SK-N-SH (cell line): ENCODE measurements at regions of chr3 and their contacts with region 1.

Region 1: DNA sequence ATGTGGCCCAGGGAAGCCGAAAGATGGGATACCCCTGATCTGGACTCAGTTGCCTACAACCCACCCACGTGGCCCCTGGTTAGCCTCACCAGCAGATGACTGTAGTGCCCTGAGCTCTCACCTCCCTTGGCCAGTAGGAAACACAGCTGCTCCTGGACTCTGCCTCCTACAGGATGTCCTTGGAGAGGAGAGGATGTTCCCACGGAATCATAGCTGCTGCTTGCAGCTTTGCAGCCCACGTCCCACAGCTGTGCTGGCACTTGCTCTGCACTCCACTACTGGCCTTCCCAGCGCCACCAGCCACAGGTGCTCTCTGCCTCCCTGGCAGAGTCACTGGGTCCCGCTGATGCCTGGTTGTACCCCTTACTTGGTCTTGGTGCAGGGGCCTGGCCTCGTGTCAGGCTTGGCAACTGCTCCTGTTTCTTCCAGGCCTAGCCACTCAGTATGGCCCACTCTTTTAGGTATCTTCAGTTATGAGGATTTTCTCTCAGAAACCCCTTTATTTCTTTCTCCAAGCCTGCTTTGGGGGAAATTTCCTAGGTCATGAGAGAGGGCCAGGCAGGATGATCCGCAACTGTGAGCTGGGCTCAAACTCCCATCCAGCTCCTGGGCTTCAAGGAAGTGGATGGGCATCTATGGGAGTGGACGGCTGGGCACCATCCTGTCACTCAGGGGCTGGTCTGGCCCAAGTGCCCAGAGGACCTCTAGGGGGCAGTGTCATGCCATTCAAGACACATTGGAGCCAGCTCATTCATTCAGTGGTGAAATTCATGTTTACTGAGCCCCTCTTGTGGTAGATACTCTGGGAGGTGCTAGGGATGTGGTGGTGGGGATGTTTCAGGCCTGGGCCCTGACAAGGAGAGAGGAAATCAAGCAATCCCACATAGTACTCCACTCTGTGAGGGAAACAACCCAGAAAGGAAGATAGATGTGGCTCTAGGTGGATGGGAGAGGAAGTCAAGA is 16.2 kb upstream of the VILL start:
- DNase-seq: peak; percentile 78
- H3K4me3 ChIP-seq: no peak overlapping the region; a peak in 1 of 4 replicates
- H3K27ac ChIP-seq: no peak overlapping the region
- H3K4me1 ChIP-seq: no peaks in the 10 kb centered on the region; a peak in 1 of 4 replicates
- H3K27me3 ChIP-seq: no peaks in the 10 kb centered on the region
- CTCF ChIP-seq: peak; percentile 83
- EP300 ChIP-seq: no peak
- RAD21 ChIP-seq: peak; percentile 70

Region 2: GRCh38 chr3:37945807-37946530 is 28.4 kb before region 1 on chr3:
- CTCF ChIA-PET with region 1: interaction called, 14 read pairs
- POLR2A ChIA-PET with region 1: no interaction called
- DNase-seq: peak; percentile 89
- H3K4me3 ChIP-seq: no peak overlapping the region; a peak in 1 of 4 replicates
- H3K27ac ChIP-seq: peak overlapping the region; percentile 83 to 98
- H3K4me1 ChIP-seq: peaks cover 25 to 38% of the 10 kb centered on the region in 2 experiments
- H3K27me3 ChIP-seq: no peaks in the 10 kb centered on the region
- CTCF ChIP-seq: no peak
- EP300 ChIP-seq: peak; percentile 54 to 96; a peak in 3 of 4 replicates
- RAD21 ChIP-seq: peak; percentile 40

Region 3: DNA sequence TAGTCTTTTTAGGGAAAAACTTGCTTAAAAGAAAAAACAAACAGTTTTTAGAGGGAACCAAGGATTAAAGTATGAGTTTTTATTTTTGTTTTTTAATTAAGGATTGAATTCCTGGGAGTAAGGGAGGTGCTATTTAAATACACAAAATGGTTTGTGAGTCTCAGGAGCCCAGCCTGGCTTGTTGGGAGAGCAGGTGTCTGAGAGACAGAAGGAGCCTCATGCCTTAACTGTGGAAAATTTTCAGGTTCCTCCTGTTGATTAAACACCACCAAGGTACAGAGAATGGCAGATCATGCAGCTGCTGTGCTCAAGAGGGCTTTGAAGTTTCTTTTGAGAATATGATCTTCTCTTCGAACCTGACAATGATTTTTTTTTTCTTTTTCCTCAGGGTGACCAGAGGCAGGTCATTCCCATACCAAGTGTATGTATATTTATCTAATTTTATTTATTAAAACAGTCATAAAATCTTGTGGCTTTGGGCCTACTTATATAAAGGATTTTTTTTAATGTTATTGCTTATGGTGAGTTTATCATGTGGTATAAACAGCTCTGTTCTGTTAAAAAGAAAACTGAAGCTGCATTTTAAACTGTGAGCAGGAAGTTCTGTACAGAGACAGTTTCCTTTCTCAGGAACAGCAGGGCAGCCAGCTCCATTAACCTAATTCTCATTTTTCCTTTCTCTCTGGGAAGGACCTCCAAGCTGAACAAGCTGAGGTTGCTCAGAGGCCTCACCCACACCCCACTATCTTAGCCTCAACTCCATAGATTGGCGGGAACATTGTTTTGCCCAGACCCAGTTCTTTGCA is 17.5 kb before region 1 on chr3:
- CTCF ChIA-PET with region 1: interaction called, 24 read pairs
- POLR2A ChIA-PET with region 1: no interaction called
- DNase-seq: no peak
- H3K4me3 ChIP-seq: no peak overlapping the region
- H3K27ac ChIP-seq: no peak overlapping the region
- H3K4me1 ChIP-seq: peaks cover 6 to 9% of the 10 kb centered on the region in 2 experiments; a peak in 3 of 4 replicates
- H3K27me3 ChIP-seq: no peaks in the 10 kb centered on the region
- CTCF ChIP-seq: no peak
- EP300 ChIP-seq: no peak
- RAD21 ChIP-seq: no peak

Region 4: GRCh38 chr3:37986479-37987314 is 12.3 kb after region 1 on chr3:
- CTCF ChIA-PET with region 1: interaction called, 33 read pairs
- POLR2A ChIA-PET with region 1: no interaction called
- DNase-seq: no peak
- H3K4me3 ChIP-seq: no peak overlapping the region
- H3K27ac ChIP-seq: no peak overlapping the region
- H3K4me1 ChIP-seq: no peaks in the 10 kb centered on the region; a peak in 1 of 4 replicates
- H3K27me3 ChIP-seq: no peaks in the 10 kb centered on the region
- CTCF ChIP-seq: no peak
- EP300 ChIP-seq: no peak
- RAD21 ChIP-seq: no peak

Region 5: DNA sequence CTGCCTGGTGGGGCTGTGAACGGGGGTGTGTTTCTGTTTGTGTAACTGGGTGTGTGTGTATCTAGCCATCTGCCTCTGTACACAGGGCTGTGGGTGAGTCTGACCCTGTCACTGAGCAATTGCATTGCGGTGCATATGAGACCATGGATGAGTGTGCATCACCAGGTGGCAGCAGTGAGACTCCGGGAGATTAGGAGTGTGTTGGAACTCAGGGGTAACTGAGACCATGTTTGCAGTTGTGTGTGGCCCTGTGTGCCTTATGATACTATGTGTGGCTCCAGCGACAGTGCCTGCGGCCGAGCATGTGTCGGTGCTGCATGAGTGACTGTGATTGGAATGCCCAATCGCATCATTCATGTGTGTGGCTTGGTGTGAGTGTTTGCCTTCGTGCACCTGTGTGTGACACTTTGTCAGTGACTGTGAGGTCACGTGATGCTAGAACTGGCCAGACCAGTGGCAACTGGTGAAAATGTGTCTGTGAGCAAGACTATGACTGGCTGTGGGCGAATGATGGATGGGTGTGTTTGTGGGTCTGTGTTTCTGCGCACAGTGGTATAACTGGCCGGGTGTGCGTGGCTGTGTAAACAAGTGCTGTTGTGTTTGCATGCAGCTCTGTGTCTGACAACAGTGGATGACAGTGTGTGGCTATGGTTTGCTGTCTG is 30.1 kb after region 1 on chr3:
- CTCF ChIA-PET with region 1: interaction called, 20 read pairs
- POLR2A ChIA-PET with region 1: no interaction called
- DNase-seq: peak; percentile 71
- H3K4me3 ChIP-seq: no peak overlapping the region; a peak in 1 of 4 replicates
- H3K27ac ChIP-seq: no peak overlapping the region
- H3K4me1 ChIP-seq: no peaks in the 10 kb centered on the region; a peak in 1 of 4 replicates
- H3K27me3 ChIP-seq: no peaks in the 10 kb centered on the region
- CTCF ChIP-seq: peak; percentile 62
- EP300 ChIP-seq: no peak
- RAD21 ChIP-seq: peak; percentile 64